Left ventricle myocardium inferior (tissue), 1 donor: ENCODE measurements at regions of chr5 and their contacts with region 1.

Region 1: GRCh38 chr5:31825518-31826068 is 186.7 kb downstream of the PDZD2 start:
- DNase-seq: no peak
- H3K4me3 ChIP-seq: no peak overlapping the region
- H3K27ac ChIP-seq: peak overlapping the region; percentile 37
- H3K4me1 ChIP-seq: peaks cover 15% of the 10 kb centered on the region
- H3K27me3 ChIP-seq: no peaks in the 10 kb centered on the region
- CTCF ChIP-seq: peak; percentile 78

Region 2: GRCh38 chr5:31702709-31703108 is 122.9 kb before region 1 on chr5:
- intact Hi-C with region 1: no loop called
- DNase-seq: no peak
- H3K4me3 ChIP-seq: no peak overlapping the region
- H3K27ac ChIP-seq: peak overlapping the region; percentile 58
- H3K4me1 ChIP-seq: peaks cover 36% of the 10 kb centered on the region
- H3K27me3 ChIP-seq: no peaks in the 10 kb centered on the region
- CTCF ChIP-seq: no peak

Region 3: GRCh38 chr5:32076699-32077695 is 251.4 kb after region 1 on chr5:
- intact Hi-C with region 1: loop called (anchors 5 kb)
- DNase-seq: peak; percentile 50
- H3K4me3 ChIP-seq: no peak overlapping the region
- H3K27ac ChIP-seq: peak overlapping the region; percentile 55
- H3K4me1 ChIP-seq: peaks cover 33% of the 10 kb centered on the region
- H3K27me3 ChIP-seq: no peaks in the 10 kb centered on the region
- CTCF ChIP-seq: peak; percentile 84

Region 4: DNA sequence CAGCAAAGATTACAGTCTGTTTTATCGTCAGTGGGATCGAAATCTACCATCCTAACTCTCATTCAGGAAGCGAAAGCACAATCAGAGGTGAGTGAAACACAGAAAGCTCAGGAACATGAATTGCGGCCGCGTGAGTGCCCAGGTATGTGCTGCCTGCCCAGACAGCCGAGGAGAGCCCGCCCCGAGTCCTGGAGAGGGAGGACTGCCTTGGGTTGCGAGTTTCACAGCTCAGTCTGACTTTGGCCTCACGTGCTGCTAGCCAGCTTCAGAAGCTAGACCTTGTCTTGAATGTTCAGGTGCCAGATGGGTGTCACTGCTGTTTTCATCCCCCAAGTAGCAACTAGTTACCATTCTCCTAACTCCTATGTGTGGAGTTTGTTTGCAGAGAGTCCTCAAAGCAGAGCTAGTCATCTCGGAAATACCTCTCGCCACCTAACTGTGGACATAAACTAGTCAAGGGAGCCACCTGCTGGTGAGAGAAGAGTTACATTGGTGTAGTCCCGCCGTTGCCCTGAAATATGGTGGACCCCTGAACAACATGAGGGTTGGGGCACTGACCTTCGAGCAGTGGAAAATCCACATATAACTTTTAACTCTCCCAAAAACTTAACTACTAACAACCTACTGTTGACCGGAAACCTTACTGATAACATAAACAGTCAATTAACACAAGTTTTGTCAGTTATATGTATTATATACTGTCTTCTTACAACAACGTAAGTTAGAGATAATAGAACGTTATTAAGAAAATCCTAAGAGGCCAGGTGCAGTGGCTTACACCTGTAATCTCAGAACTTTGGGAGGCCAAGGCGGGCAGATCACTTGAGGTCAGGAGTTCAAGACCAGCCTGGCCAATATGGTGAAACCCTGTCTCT is 267.6 kb after region 1 on chr5:
- intact Hi-C with region 1: loop called (anchors 5 kb)
- DNase-seq: no peak
- H3K4me3 ChIP-seq: no peak overlapping the region
- H3K27ac ChIP-seq: no peak overlapping the region
- H3K4me1 ChIP-seq: peaks cover 28% of the 10 kb centered on the region
- H3K27me3 ChIP-seq: no peaks in the 10 kb centered on the region
- CTCF ChIP-seq: peak; percentile 77